ENCODE measurements at regions of chr22 and their contacts with region 1.

Region 1: DNA sequence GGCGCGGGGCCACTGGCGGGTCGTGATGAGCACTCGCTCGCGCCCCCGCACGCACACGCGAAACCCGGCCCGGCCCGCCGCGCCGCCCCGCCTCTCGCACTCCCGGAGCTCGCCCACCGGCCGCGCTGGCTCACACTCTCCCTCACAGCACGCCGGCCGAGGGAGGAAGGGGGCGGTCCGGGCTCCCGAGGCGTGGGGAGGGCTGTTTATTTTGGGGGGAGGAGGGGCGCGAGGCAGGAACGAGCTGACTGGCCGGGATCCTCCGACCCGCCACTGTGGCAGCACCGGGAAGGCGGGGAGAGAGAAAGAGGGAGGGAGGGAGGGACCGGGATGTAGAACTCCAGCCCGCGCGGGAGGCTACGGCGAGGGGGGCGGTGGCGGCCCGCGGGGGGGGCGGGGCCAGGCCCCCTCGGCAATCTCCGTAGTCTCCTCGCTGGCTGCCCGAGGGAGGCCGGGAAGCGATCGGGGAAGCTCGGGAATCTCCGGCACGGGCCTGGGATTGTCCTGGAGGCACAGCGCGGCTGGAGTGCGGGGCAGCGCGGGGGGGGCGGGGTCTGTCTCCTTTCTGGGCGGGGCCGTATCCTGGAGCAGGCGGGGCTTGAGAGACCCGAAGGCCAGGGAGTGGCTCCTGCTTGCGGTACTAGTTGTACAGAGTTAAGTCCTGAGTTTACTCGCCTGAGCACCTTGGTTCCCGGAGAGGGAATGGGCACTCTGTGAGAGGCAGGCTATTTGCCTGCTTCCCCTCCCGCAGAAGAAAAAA is at the start of gene RBFOX2:
- DNase-seq: peak; percentile 92 to 99 (median 94)

Region 2: GRCh38 chr22:35777335-35777975 is 251.4 kb before region 1 on chr22:
- intact Hi-C with region 1: no loop called
- DNase-seq: no peak

Region 3: DNA sequence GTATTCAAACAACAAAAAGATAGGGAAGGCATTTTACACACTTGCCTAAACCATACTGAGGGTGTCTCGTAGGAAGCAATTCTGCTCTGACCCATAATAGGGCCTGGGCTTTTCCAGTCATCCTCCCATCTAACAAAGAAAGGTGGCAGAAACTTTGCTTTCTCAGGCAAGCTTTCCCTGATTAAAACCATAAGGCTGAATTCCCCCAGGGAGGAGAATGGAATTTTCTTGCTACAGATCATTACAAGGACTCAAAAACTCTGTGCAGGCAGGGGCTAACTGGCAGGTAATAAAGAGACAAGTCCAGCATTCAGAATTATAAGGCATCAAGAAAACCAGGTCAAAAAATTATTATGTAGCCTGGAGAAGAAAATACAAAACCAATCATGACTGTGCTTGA is 90.6 kb before region 1 on chr22:
- intact Hi-C with region 1: loop called (anchors 5 kb)
- DNase-seq: no peak

Region 4: DNA sequence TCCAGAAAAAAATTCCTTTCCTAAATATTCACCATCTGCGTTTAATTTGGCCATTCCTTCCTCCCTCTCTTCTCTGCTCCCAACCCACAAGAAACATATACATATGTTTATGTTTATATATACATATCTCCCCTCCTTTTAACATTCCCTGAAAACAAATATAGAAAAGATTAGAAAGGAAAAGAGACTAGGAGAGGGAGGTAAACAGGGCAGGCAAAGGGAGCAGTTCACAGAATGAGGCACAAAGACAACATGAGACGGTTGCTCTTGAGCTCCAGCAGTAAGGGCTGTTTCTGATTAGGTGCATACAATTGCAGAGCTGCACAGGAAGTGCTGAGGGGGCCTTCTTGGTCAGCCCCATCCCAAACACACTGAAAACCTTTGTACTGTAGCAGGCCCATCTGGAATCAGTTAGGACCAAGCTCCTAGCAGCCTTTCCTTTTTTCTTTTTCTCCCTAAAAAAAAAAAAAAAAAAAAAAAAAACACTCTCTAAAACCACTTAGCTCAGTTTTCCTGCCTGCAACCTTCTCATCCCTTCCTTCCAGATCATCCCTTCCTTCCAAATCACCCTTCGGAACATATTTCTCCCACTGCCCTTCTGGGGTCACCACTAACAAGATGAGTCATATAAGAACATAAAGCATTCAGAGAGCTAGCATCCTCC is 57.2 kb before region 1 on chr22:
- intact Hi-C with region 1: loop called (anchors 10 kb)
- DNase-seq: no peak

Region 5: GRCh38 chr22:36065775-36066559 is 37.1 kb after region 1 on chr22:
- intact Hi-C with region 1: loop called (anchors 2 kb)
- DNase-seq: peak; percentile 77 to 97 (median 85)

Region 6: GRCh38 chr22:36123673-36124630 is 95.1 kb after region 1 on chr22:
- intact Hi-C with region 1: loop called (anchors 10 kb)
- DNase-seq: peak; percentile 83 to 99 (median 90)